GM18951 (cell line): ENCODE measurements at regions of chr7 and their contacts with region 1.

Region 1: DNA sequence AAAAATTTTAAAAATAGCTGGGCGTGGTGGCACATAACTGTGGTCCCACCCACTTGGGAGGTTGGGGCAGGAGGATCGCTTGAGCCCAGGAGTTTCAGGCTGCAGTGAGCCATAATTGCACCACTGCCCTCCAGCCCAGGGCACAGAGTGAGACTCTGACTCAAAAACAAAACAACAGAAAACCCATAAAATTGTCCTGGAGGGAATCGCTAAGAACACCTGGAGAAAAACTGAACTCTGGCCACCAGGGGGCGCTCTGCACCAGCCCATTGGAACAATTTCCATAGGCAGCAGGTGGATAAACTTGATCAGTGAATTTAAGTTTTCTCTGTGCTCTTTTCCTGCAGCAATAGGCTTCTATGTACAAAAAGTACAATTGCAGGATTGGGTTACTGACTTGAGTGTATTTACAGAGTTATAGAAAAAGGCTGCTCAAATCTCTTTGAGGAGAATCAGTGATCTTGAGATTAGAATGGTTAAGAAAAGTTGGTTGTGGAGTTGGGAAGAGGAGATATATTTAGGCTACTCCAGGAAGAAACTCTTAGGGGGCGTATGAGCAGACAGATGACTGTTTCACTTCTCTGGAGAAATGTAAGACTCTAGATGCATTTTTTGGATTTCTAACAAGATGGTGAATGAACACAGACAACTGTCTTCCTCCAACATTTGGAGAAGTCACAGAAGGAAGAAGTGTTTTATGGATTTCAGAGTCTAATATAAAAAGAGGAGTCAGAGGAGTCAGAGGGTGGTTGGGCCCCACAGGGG is 274.9 kb upstream of the GALNT17 start:
- POLR2A ChIP-seq: no peak

Region 2: GRCh38 chr7:70728872-70729552 is 128.0 kb before region 1 on chr7:
- in situ Hi-C with region 1: no loop called
- POLR2A ChIP-seq: no peak

Region 3: GRCh38 chr7:71106226-71106625 is 249.2 kb after region 1 on chr7:
- in situ Hi-C with region 1: no loop called
- POLR2A ChIP-seq: no peak

Region 4: GRCh38 chr7:71497256-71497946 is 640.4 kb after region 1 on chr7:
- in situ Hi-C with region 1: no loop called
- POLR2A ChIP-seq: no peak

Region 5: GRCh38 chr7:71733107-71733870 is 876.2 kb after region 1 on chr7:
- in situ Hi-C with region 1: loop called (anchors 25 kb)
- POLR2A ChIP-seq: no peak